Natural killer cell (primary cell): ENCODE measurements at regions of chr1 and their contacts with region 1.

Region 1: GRCh38 chr1:28259307-28260167 is at the start of gene SESN2:
- DNase-seq: peak; percentile 99
- ATAC-seq: peak; percentile 95 to 98 (median 95)
- H3K4me3 ChIP-seq: peak within 1 kb of the TSS; percentile 75
- H3K4me3 Mint-ChIP-seq: peak within 1 kb of the TSS; percentile 84
- H3K27ac ChIP-seq: peak within 1 kb of the TSS; percentile 36
- H3K27ac Mint-ChIP-seq: peak within 1 kb of the TSS; percentile 62 to 87
- H3K4me1 ChIP-seq: peaks cover 52% of the 10 kb centered on the region
- H3K4me1 Mint-ChIP-seq: peaks cover 40 to 49% of the 10 kb centered on the region in 2 donors
- H3K27me3 ChIP-seq: no peaks in the 10 kb centered on the region
- H3K27me3 Mint-ChIP-seq: no peaks in the 10 kb centered on the region
- CTCF ChIP-seq: no peak
- total RNA-seq, gene SESN2: 21.0 to 30.3 (median 27.1) TPM

Region 2: GRCh38 chr1:28127617-28128257 is 131.8 kb before region 1 on chr1:
- intact Hi-C with region 1: no loop called
- DNase-seq: no peak
- ATAC-seq: no peak
- H3K4me3 ChIP-seq: no peak overlapping the region
- H3K4me3 Mint-ChIP-seq: no peak overlapping the region
- H3K27ac ChIP-seq: no peak overlapping the region
- H3K27ac Mint-ChIP-seq: no peak overlapping the region
- H3K4me1 ChIP-seq: peaks cover 6% of the 10 kb centered on the region
- H3K4me1 Mint-ChIP-seq: no peaks in the 10 kb centered on the region
- H3K27me3 ChIP-seq: no peaks in the 10 kb centered on the region
- H3K27me3 Mint-ChIP-seq: peaks cover 2 to 14% of the 10 kb centered on the region in 2 donors
- CTCF ChIP-seq: no peak

Region 3: GRCh38 chr1:28160782-28161266 is 98.7 kb before region 1 on chr1:
- intact Hi-C with region 1: no loop called
- DNase-seq: no peak
- ATAC-seq: no peak
- H3K4me3 ChIP-seq: no peak overlapping the region
- H3K4me3 Mint-ChIP-seq: no peak overlapping the region
- H3K27ac ChIP-seq: no peak overlapping the region
- H3K27ac Mint-ChIP-seq: no peak overlapping the region
- H3K4me1 ChIP-seq: peaks cover 3% of the 10 kb centered on the region
- H3K4me1 Mint-ChIP-seq: peaks cover 0 to 15% of the 10 kb centered on the region in 2 donors
- H3K27me3 ChIP-seq: no peaks in the 10 kb centered on the region
- H3K27me3 Mint-ChIP-seq: peaks cover 0 to 4% of the 10 kb centered on the region in 2 donors
- CTCF ChIP-seq: no peak

Region 4: DNA sequence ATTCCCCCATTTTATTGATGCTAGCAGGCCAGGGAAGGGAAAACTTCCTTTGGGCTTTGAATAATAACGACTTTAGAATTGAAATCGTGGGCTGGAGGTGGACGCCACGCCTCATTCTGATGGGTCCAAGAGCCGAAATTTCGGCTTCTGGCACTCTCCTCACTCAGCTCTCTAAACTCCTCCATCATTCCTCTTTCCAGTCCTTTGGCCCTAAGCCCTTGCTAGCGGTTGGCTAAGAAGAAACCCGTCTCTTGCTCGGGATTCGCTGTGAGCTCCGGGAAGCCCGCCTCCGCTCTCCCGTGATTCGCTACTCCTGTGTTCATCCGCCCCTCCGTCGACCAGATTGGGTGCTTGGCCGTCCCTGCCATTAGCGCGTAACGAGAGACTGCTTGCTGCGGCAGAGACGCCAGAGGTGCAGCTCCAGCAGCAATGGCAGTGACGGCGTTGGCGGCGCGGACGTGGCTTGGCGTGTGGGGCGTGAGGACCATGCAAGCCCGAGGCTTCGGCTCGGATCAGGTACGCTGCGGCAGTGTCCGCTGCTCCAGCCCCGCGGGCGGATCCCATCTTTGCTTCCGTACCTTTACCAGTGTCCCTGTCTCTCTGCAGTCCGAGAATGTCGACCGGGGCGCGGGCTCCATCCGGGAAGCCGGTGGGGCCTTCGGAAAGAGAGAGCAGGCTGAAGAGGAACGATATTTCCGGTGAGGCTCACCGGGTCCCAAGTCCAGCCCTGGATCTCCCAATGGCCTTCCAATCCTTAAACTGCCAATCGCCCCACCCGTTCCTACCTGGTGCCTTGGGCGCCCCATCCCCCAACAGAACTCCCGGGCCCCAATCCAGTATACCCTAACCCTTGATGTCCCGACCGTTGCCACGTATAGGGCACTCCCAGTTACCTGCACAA is 23.5 kb before region 1 on chr1 and contains the start of gene ATP5IF1:
- intact Hi-C with region 1: loop called (anchors 1 kb)
- DNase-seq: peak; percentile 91 to 98
- ATAC-seq: peak; percentile 94 to 98 (median 95)
- H3K4me3 ChIP-seq: peak within 1 kb of the TSS; percentile 76
- H3K4me3 Mint-ChIP-seq: no peak within 1 kb of the TSS
- H3K27ac ChIP-seq: peak within 1 kb of the TSS; percentile 66
- H3K27ac Mint-ChIP-seq: no peak within 1 kb of the TSS
- H3K4me1 ChIP-seq: peaks cover 39% of the 10 kb centered on the region
- H3K4me1 Mint-ChIP-seq: peaks cover 12 to 13% of the 10 kb centered on the region in 2 donors
- H3K27me3 ChIP-seq: no peaks in the 10 kb centered on the region
- H3K27me3 Mint-ChIP-seq: no peaks in the 10 kb centered on the region
- CTCF ChIP-seq: no peak
- total RNA-seq, gene ATP5IF1: 81.1 to 101 (median 91.1) TPM

Region 5: GRCh38 chr1:28329395-28330153 is 70.0 kb after region 1 on chr1:
- intact Hi-C with region 1: loop called (anchors 2 kb)
- DNase-seq: peak in 1 of 2 donors; percentile 68
- ATAC-seq: peak in 2 of 3 donors; percentile 3 to 14
- H3K4me3 ChIP-seq: peak overlapping the region; percentile 57
- H3K4me3 Mint-ChIP-seq: peak overlapping the region; percentile 97
- H3K27ac ChIP-seq: peak overlapping the region; percentile 87
- H3K27ac Mint-ChIP-seq: peak overlapping the region; percentile 97
- H3K4me1 ChIP-seq: peaks cover 26% of the 10 kb centered on the region
- H3K4me1 Mint-ChIP-seq: peaks cover 25 to 43% of the 10 kb centered on the region in 2 donors
- H3K27me3 ChIP-seq: no peaks in the 10 kb centered on the region
- H3K27me3 Mint-ChIP-seq: no peaks in the 10 kb centered on the region
- CTCF ChIP-seq: no peak